Dendritic cell treated with granulocyte-macrophage colony-stimulating factor and Interleukin-4, amounts not matched to agents 40 ng/mL and 50 ng/mL, for 4 days (primary cell): ENCODE measurements at regions of chr18 and their contacts with region 1.

Region 1: DNA sequence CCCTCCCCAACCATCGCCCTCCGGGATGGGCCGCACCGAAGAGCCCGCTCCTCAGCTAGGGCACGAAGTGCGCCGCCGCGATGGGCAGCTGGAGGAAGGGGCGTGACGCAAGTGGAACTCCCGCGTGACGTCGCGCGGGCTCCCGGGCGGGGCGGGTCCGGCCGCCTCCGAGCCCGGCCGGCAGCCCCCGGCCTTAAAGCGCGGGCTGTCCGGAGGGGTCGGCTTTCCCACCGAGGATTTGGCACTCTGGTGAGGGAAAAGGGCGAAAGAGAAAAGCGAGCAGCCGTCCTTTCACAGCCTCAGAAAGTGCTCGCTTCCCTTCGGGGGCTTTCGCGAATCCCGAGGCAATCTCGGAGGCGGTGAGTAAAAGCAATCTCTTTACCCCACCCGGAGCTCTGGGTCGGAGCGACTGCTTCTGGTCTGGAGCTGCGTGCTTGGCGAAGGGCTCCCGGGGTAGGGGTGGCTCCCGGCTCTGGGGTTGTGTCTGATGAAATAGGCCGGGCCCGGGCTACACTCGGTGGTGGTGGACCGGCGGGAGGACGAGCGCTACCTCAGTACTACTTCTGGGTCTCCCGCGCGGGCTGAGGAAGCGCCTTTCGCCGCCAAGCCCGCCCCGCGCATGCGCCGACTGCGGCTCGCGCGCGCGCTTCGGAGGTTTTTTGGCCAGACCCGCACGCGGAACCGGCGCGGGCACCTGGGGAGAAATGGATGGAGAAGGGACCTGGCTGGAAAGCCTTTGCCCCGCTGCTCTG is at the start of gene RBBP8:
- H3K4me3 Mint-ChIP-seq: peak within 1 kb of the TSS; percentile 91
- H3K27ac Mint-ChIP-seq: peak within 1 kb of the TSS; percentile 95
- H3K4me1 Mint-ChIP-seq: peaks cover 16% of the 10 kb centered on the region
- H3K27me3 Mint-ChIP-seq: no peaks in the 10 kb centered on the region

Region 2: GRCh38 chr18:22983175-22983574 is 49.8 kb after region 1 on chr18:
- intact Hi-C with region 1: loop called (anchors 1 kb)
- H3K4me3 Mint-ChIP-seq: no peak overlapping the region
- H3K27ac Mint-ChIP-seq: no peak overlapping the region
- H3K4me1 Mint-ChIP-seq: peaks cover 11% of the 10 kb centered on the region
- H3K27me3 Mint-ChIP-seq: no peaks in the 10 kb centered on the region

Region 3: DNA sequence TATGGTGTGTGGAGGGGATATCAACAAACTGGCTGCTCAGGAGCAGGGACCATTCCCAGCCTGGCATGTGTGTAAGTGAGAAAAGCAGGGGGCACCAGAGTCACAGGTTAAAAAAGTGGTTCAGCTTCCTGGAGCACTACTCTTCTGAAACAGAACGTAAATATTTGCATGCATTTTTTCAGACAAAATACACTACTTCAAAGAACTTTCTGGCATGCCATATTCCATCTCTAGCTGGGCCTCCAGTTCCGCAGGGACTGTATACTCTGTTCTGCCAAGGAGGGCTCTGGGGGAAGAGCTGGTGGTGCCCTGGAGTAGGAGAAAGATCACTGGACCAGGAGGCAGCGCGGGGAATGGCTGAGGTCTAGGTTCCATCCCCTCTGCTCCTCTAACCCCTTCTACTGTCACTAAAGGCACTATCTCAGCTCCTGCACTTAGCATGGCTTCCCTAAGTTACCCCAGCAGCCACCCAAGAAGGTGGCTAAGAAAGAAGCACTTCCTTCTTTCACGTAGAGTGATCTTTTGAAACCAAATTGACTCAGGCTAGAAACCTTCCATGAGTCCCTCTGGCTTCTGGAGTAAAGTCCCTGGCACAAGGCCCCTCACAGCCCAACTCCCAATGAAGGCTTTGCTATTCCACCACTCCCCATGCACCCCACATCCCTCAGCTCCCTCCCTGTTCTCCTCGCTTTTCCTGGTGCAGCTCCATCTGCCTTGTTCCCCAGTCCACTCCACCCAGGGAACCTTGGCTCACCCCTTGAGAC is 144.3 kb after region 1 on chr18:
- intact Hi-C with region 1: loop called (anchors 5 kb)
- H3K4me3 Mint-ChIP-seq: peak overlapping the region; percentile 23
- H3K27ac Mint-ChIP-seq: peak overlapping the region; percentile 88
- H3K4me1 Mint-ChIP-seq: peaks cover 38% of the 10 kb centered on the region
- H3K27me3 Mint-ChIP-seq: no peaks in the 10 kb centered on the region

Region 4: DNA sequence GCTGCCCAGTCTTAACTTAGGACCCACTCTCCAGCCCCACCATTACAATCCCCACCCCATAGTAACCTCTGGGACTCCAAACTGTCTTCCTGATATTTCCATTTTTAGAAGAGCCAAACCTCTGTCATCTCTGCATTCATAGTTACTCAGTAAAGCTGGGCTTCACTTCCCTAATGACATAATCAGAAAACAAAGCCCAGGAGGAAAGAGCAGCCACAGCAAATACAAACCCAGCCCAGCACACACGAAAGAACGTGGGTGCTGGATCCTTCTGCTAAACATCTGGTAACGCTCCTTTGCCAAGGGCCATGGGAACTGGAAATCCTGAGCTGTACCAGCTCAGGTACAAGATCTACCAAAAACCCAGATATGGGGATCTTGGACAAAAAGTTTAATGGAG is 482.9 kb after region 1 on chr18:
- intact Hi-C with region 1: loop called (anchors 10 kb)
- H3K4me3 Mint-ChIP-seq: no peak overlapping the region
- H3K27ac Mint-ChIP-seq: peak overlapping the region; percentile 78
- H3K4me1 Mint-ChIP-seq: peaks cover 19% of the 10 kb centered on the region
- H3K27me3 Mint-ChIP-seq: no peaks in the 10 kb centered on the region

Region 5: GRCh38 chr18:23487738-23488570 is 554.6 kb after region 1 on chr18:
- intact Hi-C with region 1: no loop called
- H3K4me3 Mint-ChIP-seq: peak overlapping the region; percentile 56
- H3K27ac Mint-ChIP-seq: peak overlapping the region; percentile 78
- H3K4me1 Mint-ChIP-seq: peaks cover 27% of the 10 kb centered on the region
- H3K27me3 Mint-ChIP-seq: no peaks in the 10 kb centered on the region